GM10248 (cell line): ENCODE measurements at regions of chr11 and their contacts with region 1.

Region 1: DNA sequence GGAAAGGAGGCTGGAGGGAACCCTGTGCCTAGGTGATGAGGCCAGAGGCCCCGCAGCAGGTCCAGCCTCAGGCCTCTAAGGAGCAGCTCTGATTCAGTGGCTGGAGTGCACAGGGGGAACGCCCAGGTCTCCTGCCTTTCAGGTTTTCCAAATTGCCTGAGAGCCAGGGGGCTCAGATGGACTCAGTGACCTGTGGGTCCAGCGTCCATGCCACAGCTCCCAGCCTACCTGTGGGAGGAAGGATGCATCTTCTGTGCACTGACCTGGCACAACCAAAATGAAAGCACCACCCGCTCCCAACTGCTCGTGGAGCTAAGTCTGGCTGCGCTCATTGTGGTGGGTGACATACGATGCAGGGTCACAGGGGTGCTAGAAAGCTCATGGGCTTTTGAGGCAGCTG is 82.8 kb downstream of the FEZ1 start:
- DNase-seq: no peak
- CTCF ChIP-seq: no peak

Region 2: DNA sequence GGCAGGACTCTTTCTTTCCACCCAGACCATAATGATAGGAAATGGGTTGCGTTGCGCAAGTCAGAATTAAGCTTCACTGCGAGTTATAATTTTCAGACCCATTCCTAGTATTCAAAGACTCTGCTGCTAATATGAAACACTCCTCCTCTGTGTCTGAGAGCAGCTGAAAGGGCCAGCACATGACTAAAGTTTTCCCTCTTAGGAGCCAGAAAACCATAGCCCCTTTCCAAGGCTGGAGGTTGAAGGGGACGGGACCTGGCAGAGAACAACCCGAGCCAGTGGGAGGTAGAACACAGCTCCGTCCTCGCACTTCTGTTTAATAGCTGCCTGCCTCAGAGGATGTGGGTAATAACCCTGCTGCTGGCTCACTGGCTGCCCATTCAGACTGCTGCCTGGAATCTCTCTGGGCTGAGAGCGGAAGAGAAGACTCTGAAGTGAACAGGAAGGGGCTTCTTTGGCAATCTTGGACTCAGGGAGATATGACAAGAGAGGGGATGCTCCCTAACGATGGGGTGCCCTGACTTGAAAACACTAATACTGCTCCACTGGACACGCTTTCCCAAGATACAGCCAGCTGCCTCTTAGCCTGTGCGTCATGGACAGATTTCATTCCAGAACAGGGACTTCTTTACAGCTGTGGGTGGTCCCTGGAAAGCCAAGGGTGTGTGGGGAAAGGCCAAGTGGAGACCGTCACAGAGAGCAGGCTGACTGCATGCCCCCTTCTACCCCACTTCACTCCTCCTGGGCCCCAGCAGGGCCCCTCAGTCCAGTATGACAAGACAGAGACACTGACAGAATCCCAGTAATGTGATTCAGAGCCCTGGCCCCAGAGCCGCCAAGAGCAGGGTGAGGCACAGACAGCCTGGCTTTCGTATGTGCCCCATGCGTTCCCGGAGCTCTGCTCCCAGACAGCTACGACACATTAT is 74.1 kb before region 1 on chr11:
- CTCF ChIA-PET with region 1: no interaction called
- POLR2A ChIA-PET with region 1: no interaction called
- DNase-seq: no peak
- CTCF ChIP-seq: no peak

Region 3: DNA sequence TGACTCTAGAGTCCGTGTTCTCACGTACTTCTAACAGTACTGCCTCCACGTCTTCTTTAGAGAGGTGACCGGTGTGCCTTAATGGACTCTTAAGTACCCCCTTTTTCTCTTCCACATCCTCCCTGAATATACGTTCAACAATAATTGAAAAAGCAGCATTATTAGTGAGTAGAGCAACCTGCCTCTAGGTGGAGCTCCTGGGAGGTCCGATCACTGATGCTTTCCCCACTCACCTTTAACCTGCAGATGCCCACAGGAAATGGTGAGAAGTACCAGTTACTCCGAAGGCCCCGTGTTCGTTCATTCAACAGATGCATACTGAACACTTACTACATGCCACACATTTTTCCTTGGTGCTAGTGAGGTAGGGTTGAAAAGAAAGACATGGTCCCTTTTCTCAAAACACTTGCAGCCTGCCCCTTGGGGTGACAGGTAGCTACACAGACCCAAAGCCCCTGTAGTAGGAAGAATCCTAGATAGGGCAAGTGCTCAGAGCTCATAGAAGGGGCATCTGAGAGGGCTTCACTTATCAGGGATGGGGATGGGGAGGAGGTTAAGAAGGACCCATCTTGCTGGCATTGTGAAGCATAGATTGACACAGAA is 10.1 kb after region 1 on chr11:
- CTCF ChIA-PET with region 1: interaction called, 19 read pairs
- POLR2A ChIA-PET with region 1: no interaction called
- DNase-seq: peak; percentile 50
- CTCF ChIP-seq: peak; percentile 52

Region 4: DNA sequence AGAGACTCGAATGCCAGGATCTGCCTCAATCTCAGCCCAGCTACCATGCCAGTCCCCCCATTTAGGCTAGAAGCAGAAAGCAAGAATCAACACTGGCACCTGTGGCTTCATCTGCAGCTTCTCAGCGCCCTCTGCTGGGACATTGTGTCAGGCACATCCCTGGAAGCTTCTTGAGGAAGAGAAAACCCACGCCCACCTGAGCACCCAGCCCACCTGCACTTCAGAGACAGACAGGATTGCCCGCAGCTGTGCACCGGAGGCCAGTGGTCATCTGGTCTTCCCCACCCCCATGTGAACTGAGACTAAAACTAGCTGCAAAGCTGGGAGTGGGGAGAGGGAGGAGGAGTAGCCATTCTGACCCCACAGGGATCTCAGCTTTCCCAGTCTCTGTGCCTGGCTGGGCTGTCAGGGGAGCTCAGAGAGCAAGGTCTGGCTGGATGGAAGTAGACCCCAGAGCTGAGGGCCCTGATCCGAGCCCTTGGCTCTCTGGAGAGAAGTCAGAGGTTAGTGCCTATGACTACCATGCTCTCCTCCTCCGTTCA is 16.0 kb after region 1 on chr11:
- CTCF ChIA-PET with region 1: interaction called, 17 read pairs
- POLR2A ChIA-PET with region 1: no interaction called
- DNase-seq: peak; percentile 79
- CTCF ChIP-seq: peak; percentile 78

Region 5: GRCh38 chr11:125559888-125560287 is 146.7 kb after region 1 on chr11:
- CTCF ChIA-PET with region 1: no interaction called
- POLR2A ChIA-PET with region 1: no interaction called
- DNase-seq: no peak
- CTCF ChIP-seq: no peak

Region 6: GRCh38 chr11:125637840-125638239 is 224.6 kb after region 1 on chr11:
- CTCF ChIA-PET with region 1: no interaction called
- POLR2A ChIA-PET with region 1: no interaction called
- DNase-seq: no peak
- CTCF ChIP-seq: no peak

Region 7: DNA sequence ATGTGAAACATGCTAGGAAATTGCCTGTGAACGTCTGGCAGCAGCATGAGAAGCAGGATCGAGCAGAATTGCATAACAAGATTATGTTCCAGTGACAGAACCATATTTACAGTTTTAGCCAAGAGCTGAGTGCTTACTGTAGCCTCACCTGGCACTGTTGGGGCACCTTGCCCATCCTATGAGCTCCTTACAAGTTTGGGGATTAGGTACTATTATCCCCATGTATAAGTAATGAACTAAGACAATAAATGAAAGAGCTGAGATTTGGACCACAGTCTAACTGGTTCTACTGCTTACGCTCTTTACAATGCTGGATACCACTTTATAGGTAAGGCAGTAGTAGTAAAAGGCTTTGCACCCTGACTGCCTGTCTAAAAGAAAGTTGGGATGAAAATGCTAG is 315.7 kb after region 1 on chr11:
- CTCF ChIA-PET with region 1: no interaction called
- POLR2A ChIA-PET with region 1: no interaction called
- DNase-seq: no peak
- CTCF ChIP-seq: no peak